Dendritic cell treated with granulocyte-macrophage colony-stimulating factor and Interleukin-4, amounts not matched to agents 40 ng/mL and 50 ng/mL, for 4 days (primary cell): ENCODE measurements at regions of chr6 and their contacts with region 1.

Region 1: GRCh38 chr6:37239950-37240713 is 17.4 kb upstream of the TBC1D22B start:
- H3K4me3 Mint-ChIP-seq: no peak overlapping the region
- H3K27ac Mint-ChIP-seq: peak overlapping the region; percentile 74
- H3K4me1 Mint-ChIP-seq: peaks cover 48% of the 10 kb centered on the region
- H3K27me3 Mint-ChIP-seq: no peaks in the 10 kb centered on the region

Region 2: GRCh38 chr6:37051138-37052026 is 188.8 kb before region 1 on chr6:
- intact Hi-C with region 1: loop called (anchors 1 kb)
- H3K4me3 Mint-ChIP-seq: peak overlapping the region; percentile 21
- H3K27ac Mint-ChIP-seq: peak overlapping the region; percentile 85
- H3K4me1 Mint-ChIP-seq: peaks cover 66% of the 10 kb centered on the region
- H3K27me3 Mint-ChIP-seq: peaks cover 20% of the 10 kb centered on the region

Region 3: DNA sequence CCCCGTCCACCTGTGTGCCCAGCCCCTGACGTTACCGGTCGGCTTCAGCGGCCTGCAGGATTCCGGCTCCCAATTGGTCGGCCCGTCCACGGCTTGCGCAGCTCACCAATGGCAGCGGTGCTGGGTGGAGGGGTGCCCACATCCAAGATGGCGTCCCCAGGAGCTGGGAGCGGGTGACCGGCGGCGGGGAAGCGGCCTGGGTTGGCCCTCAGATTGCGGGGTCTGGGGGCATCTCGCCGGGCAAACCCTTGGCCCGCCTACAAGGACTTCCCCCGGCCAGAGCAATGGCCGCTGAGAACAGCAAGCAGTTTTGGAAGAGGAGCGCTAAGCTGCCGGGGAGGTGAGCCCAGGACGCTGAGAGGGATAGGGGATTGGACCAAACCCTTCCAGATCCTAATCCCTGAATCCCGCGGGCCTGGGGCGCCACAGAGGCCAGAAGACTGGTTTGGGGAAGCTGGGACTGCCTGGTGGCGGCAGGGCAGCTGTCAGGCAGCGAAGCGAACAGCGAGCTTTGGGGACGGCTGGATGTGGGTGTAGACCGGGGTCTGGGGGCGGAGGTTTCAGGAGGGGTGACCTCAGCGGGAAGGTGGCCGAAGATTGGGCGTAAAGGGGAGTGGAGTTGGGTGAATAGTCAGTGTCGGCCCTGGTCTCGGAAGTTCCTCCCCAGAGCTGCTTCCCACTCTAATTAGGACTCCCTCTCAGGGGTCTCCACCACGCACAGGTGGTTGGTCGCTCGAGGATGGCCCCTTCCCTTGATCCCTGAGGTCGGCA is 17.7 kb after region 1 on chr6 and contains the starts of genes TBC1D22B and TMEM217:
- intact Hi-C with region 1: loop called (anchors 2 kb)
- H3K4me3 Mint-ChIP-seq: peak within 1 kb of the TSS; percentile 93
- H3K27ac Mint-ChIP-seq: peak within 1 kb of the TSS; percentile 96
- H3K4me1 Mint-ChIP-seq: peaks cover 38% of the 10 kb centered on the region
- H3K27me3 Mint-ChIP-seq: peaks cover 3% of the 10 kb centered on the region